ENCODE measurements at regions of chr10 and their contacts with region 1.

Region 1: DNA sequence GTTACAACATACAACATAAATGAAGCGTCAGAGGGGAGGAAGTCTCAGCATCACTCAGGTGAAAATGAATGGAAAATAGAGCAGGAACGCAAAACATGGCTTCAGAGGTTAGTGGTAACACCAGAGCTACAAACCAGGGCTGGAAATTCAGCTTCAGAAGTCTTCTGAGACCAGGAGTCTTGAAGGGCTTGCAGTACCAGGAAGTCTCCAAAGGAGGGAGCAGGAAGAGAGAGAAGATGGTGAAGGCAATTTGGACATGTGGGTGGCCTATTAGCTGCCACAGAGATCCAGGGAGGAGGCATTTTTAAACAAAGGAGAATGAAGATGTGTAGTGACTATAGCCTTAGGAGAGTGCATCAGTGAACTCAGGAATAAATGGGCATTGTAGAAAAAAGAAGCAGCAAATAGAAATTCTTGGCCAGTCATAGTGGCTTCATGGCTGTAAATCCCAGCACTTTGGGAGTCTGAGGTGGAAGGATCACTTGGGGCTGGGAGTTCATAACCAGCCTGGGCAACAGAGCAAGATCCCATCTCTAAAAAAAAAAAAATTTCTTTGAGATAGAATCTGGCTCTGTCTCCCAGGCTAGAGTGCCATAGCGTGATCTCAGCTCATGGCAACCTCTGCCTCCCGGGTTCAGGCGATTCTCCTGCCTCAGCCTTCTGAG is 9.3 kb upstream of the TET1 start:
- DNase-seq: peak; percentile 62
- H3K4me3 ChIP-seq: no peak overlapping the region
- H3K27ac ChIP-seq: no peak overlapping the region
- H3K4me1 ChIP-seq: no peaks in the 10 kb centered on the region
- H3K27me3 ChIP-seq: no peaks in the 10 kb centered on the region
- CTCF ChIP-seq: peak; percentile 70 to 75
- POLR2A ChIP-seq: no peak

Region 2: GRCh38 chr10:68251151-68251550 is 299.7 kb before region 1 on chr10:
- CTCF ChIA-PET with region 1: no interaction called
- POLR2A ChIA-PET with region 1: no interaction called
- dilution Hi-C with region 1: no loop called
- intact Hi-C with region 1: no loop called
- DNase-seq: no peak
- H3K4me3 ChIP-seq: no peak overlapping the region
- H3K27ac ChIP-seq: no peak overlapping the region
- H3K4me1 ChIP-seq: no peaks in the 10 kb centered on the region
- H3K27me3 ChIP-seq: peaks cover 4 to 11% of the 10 kb centered on the region in 2 experiments
- CTCF ChIP-seq: no peak
- POLR2A ChIP-seq: no peak

Region 3: GRCh38 chr10:68586606-68587305 is 35.9 kb after region 1 on chr10:
- CTCF ChIA-PET with region 1: interaction called, 11 read pairs
- POLR2A ChIA-PET with region 1: no interaction called
- dilution Hi-C with region 1: no loop called
- intact Hi-C with region 1: no loop called
- DNase-seq: no peak
- H3K4me3 ChIP-seq: no peak overlapping the region
- H3K27ac ChIP-seq: no peak overlapping the region
- H3K4me1 ChIP-seq: no peaks in the 10 kb centered on the region
- H3K27me3 ChIP-seq: peaks cover 0 to 1% of the 10 kb centered on the region in 2 experiments
- CTCF ChIP-seq: no peak
- POLR2A ChIP-seq: no peak

Region 4: DNA sequence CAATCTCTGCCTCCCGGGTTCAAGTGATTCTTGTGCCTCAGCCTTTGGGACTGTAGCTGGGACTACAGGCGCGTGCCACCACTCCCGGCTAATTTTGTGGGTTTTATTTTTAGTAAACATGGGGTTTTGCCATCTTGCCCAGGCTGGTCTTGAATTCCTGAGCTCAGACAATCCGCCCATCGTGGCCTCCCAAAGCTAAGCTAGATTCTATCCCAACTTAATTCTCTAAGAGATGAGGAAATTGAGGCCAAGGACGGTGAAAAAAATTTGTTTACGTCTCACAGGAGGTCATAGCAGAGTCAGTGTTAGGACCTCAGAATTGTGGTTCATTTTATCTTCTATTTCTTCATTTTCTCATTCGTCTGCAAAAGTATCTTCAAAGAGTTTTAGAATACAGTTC is 176.3 kb after region 1 on chr10:
- CTCF ChIA-PET with region 1: interaction called, 15 read pairs
- POLR2A ChIA-PET with region 1: no interaction called
- dilution Hi-C with region 1: no loop called
- intact Hi-C with region 1: no loop called
- DNase-seq: no peak
- H3K4me3 ChIP-seq: no peak overlapping the region
- H3K27ac ChIP-seq: no peak overlapping the region
- H3K4me1 ChIP-seq: peaks cover 9% of the 10 kb centered on the region
- H3K27me3 ChIP-seq: no peaks in the 10 kb centered on the region
- CTCF ChIP-seq: no peak
- POLR2A ChIP-seq: no peak

Region 5: DNA sequence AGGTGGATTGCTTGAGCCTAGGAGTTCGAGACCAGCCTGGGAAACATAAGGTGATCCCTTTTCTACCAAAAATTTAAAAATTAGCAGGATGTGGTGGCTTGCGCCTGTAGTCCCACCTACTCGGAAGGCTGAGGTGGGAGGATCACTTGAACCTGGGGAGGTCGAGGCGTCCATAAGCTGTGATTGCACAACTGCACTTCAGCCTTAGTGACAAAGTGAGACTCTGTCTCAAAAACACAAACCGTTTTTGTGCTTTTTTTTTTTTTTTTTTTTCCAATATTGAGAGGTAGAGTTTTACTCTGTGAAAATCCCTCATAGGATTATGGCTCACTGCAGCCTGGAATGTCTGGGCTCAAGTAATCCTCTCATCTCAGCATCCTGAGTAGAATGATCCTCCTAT is 184.2 kb after region 1 on chr10:
- CTCF ChIA-PET with region 1: interaction called, 12 read pairs
- POLR2A ChIA-PET with region 1: no interaction called
- dilution Hi-C with region 1: no loop called
- intact Hi-C with region 1: no loop called
- DNase-seq: no peak
- H3K4me3 ChIP-seq: no peak overlapping the region
- H3K27ac ChIP-seq: no peak overlapping the region
- H3K4me1 ChIP-seq: no peaks in the 10 kb centered on the region
- H3K27me3 ChIP-seq: no peaks in the 10 kb centered on the region
- CTCF ChIP-seq: no peak
- POLR2A ChIP-seq: no peak